IMR-90 (cell line): ENCODE measurements at regions of chr1 and their contacts with region 1.

Region 1: DNA sequence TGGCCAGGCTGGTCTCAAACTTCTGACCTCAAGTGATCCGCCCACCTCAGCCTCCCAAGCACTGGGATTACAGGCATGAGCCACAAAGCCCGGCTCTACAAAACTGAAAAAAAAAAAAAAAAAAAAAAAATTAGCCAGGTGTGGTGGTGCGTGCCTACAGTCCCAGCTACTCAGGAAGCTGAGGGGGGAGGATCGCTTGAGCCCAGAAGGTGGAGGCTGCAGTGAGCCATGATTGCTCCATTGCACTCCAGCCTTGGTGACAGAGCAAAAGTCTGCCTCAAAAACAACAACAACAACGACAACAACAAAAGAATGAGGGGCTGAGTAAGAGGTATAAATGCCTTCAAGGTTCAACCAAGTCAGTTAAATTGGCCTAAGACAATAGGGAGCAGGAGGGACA is 9.7 kb upstream of the PAFAH2 start:
- DNase-seq: no peak
- ATAC-seq: no peak
- H3K4me3 ChIP-seq: no peak overlapping the region
- H3K27ac ChIP-seq: no peak overlapping the region
- H3K4me1 ChIP-seq: no peaks in the 10 kb centered on the region
- H3K27me3 ChIP-seq: peaks cover 15% of the 10 kb centered on the region
- CTCF ChIP-seq: no peak
- POLR2A ChIP-seq: no peak
- RAD21 ChIP-seq: no peak

Region 2: DNA sequence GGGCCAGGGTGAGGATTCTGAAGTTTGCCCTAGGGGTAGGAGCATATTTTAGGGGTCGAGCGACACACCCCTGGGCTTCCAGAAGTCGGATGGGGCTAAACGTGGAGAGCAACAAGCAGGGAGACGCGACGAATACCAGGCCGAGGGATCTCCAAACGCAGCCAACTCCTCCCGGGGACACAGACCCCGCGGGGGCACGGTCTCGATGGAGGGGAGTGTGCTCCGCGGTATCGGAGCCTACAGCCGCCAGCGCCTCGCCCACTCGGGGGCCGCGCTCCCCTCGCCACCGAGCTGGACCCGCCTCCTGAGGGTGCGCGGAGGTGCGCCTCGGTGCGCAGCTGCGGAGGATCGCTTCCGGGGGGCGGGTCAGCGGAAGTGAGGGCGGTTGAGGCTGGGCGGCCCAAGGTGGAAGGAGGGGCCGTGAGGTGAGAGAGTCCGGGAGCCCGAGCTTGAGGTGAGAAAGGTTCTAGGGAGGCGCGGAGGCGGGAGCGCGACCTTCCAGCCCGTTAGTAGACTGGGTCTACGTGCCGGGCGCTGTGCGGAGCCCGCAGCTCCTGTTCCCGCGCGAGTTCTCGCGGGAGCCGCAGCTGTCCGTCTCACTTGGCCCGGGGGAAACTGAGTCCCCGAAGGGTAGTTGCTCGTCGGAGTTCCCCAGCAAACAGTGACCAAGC is 187.8 kb before region 1 on chr1 and contains the start of gene MTFR1L:
- CTCF ChIA-PET with region 1: no interaction called
- POLR2A ChIA-PET with region 1: no interaction called
- dilution Hi-C with region 1: no loop called
- in situ Hi-C with region 1: no loop called
- intact Hi-C with region 1: no loop called
- DNase-seq: peak; percentile 55
- ATAC-seq: peak; percentile 89
- H3K4me3 ChIP-seq: peak within 1 kb of the TSS; percentile 90
- H3K27ac ChIP-seq: peak within 1 kb of the TSS; percentile 96
- H3K4me1 ChIP-seq: peaks cover 16% of the 10 kb centered on the region
- H3K27me3 ChIP-seq: no peaks in the 10 kb centered on the region
- CTCF ChIP-seq: no peak
- POLR2A ChIP-seq: peak; percentile 66; the same call in 1 of the 2 replicates
- RAD21 ChIP-seq: no peak
- total RNA-seq, gene MTFR1L: 57.2 and 69.7 TPM in 2 replicates

Region 3: GRCh38 chr1:25958465-25958864 is 49.1 kb before region 1 on chr1:
- CTCF ChIA-PET with region 1: interaction called, 3 read pairs
- POLR2A ChIA-PET with region 1: interaction called, 13 read pairs
- dilution Hi-C with region 1: no loop called
- in situ Hi-C with region 1: no loop called
- intact Hi-C with region 1: no loop called
- DNase-seq: peak; percentile 87
- ATAC-seq: peak; percentile 90
- H3K4me3 ChIP-seq: no peak overlapping the region
- H3K27ac ChIP-seq: no peak overlapping the region; the same call in 1 of the 2 replicates
- H3K4me1 ChIP-seq: peaks cover 11% of the 10 kb centered on the region
- H3K27me3 ChIP-seq: no peaks in the 10 kb centered on the region
- CTCF ChIP-seq: no peak
- POLR2A ChIP-seq: no peak
- RAD21 ChIP-seq: no peak